ENCODE measurements at regions of chr7 and their contacts with region 1.

Region 1: DNA sequence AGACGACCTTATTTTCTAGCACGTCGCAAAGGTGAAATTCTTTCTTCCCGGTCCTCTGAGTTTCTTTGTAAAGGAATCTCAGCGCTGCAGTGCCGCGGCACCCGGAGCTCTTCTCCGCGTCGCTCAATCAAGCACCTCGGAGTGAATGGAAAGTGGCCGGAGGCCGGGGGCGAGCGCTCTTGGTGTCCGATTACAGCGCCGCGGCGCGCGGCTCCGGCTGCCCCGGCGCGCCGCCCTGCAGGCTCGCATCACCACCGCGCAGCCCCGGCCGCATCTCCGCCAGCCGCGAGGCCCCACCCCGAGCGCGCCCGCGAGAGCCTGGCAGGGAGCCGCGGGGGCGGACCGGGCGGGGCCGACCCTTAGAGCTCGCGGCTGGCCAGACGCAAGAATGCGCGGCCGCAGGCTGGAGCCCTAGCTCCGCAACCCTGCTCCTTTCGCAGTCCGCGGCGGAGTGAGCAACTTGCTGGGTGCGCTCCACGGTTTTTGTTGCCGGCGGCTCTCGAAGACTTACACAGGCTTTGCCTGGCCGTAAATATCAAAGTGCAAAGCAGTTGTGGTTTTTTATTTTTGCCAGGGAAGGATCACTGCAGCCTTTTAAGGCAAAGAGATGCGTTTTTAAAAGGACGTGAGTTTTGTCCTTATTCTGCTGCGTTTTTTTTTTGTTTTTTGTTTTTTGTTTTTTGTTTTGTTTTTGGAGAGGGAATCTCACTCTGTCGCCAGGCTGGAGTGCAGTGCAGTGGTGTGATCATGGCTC is at the start of gene SEMA3C:
- DNase-seq: peak; percentile 95
- H3K4me3 ChIP-seq: peak within 1 kb of the TSS; percentile 53 to 80 (median 78)
- H3K27ac ChIP-seq: peak within 1 kb of the TSS; percentile 76 to 91 (median 86)
- H3K4me1 ChIP-seq: peaks cover 4 to 43% (median 37%) of the 10 kb centered on the region in 4 donors
- H3K27me3 ChIP-seq: no peaks in the 10 kb centered on the region
- CTCF ChIP-seq: peak in 2 of 3 experiments; percentile 8 to 18
- EP300 ChIP-seq: no peak
- POLR2A ChIP-seq: peak; percentile 34
- total RNA-seq, gene SEMA3C: 117 to 181 (median 158) TPM

Region 2: DNA sequence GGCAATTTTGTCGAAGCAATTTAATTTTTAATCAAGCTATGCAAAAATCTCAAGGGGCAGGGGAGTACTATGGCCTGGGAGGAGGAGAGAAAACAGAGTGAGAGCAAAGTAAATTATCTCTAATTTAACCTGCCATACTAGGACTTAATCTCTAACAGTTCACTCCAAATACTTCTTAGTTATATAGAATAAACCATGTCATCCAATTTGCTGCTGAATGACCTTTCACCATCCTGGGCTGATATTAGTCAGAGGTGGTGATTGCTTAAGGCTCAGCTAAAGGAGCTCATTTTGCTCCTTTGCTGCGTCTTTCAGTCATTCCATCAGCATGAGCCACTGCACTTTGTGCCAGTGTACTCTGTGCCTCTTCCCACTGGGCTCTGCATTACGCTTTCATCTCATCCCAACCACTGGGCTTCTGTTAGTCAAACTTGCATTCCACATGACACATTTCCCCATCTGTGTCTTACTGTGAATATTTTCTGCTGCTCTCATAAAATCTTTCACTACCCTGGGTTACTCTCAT is 196.4 kb before region 1 on chr7:
- intact Hi-C with region 1: loop called (anchors 10 kb)
- DNase-seq: peak; percentile 92
- H3K4me3 ChIP-seq: no peak overlapping the region
- H3K27ac ChIP-seq: peak overlapping the region; percentile 69 to 85 (median 84)
- H3K4me1 ChIP-seq: peaks cover 7 to 44% (median 42%) of the 10 kb centered on the region in 4 donors
- H3K27me3 ChIP-seq: no peaks in the 10 kb centered on the region
- CTCF ChIP-seq: no peak
- EP300 ChIP-seq: no peak
- POLR2A ChIP-seq: no peak

Region 3: DNA sequence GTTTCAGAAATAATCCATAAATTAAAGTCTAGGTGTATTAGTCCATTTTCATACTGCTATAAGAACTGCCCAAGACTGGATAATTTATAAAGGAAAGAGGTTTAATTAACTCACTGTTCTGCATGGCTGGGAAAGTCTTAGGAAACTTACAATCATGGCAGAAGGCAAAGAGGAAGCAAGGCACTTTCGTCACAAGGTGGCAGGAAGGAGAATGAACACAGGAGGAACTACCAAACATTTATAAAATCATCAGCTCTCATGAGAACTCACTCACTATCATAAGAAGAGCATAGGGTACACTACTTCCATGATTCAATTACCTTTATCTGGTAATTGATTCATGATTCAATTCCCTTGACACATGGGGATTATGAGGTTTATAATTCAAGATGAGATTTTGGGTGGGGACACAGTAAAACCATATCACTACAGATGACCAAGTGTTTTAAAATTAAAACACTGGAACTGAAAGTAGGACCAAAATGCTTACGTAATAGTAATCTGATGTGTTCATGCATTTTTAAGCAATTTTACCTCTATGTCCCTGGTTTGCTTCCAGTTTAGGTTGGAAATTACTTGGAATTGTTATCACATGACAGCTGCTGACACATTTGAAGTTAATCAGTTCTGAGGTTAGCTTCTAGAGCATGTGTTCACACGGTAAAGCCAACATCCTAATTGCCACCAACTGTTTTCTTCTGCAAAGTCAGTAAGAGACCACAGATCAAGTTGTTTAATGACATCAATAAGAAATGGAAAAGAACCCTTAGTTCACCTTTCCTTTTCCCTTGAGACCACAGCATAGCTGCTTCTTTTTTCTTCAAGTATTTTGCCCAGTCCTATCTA is 48.2 kb after region 1 on chr7:
- intact Hi-C with region 1: no loop called
- DNase-seq: no peak
- H3K4me3 ChIP-seq: no peak overlapping the region
- H3K27ac ChIP-seq: no peak overlapping the region
- H3K4me1 ChIP-seq: no peaks in the 10 kb centered on the region
- H3K27me3 ChIP-seq: no peaks in the 10 kb centered on the region
- CTCF ChIP-seq: no peak
- EP300 ChIP-seq: no peak
- POLR2A ChIP-seq: no peak

Region 4: DNA sequence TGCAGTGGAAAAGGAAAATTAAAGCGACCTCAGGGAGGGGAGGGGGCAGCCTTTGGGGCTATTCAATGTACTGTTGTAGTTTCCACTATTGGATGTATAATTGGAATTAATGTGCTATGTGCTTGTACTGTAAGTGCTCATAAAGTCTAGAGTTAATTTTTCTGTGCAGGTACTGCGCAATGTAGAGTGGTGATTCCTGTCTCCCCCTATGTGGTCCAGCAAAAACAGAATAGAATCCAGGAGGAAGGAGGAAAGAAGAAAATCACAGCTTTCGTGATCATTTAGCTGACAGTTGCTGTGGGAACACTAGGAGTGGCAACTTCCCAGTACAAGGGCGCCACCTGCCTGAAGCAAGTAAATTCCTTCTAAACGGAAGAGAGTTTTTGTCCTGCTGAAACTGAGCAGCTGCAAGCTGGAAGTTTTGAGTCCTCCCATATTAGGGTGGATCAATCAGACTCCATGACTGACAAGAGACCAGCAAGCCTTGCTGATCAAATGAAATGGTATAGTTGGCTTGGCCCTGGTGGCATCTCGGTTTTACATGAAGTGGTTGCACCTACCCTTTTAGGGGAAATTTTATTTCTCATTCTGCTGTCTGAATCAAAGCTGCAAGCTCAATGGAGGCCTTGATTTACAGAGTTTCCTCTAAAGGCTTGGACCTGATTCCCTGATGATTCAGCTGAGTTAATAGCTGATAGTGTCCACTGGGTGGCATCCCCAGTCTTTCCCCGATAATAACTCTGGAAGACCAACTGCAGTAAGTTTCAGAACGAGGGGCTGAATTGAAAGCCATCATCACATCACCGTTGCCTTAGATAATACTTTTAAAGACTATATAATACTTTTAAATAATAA is 551.0 kb after region 1 on chr7:
- intact Hi-C with region 1: loop called (anchors 10 kb)
- DNase-seq: no peak
- H3K4me3 ChIP-seq: no peak overlapping the region
- H3K27ac ChIP-seq: no peak overlapping the region
- H3K4me1 ChIP-seq: peaks cover 0 to 9% (median 3%) of the 10 kb centered on the region in 4 donors
- H3K27me3 ChIP-seq: no peaks in the 10 kb centered on the region
- CTCF ChIP-seq: peak; percentile 61 to 69 (median 63)
- EP300 ChIP-seq: no peak
- POLR2A ChIP-seq: no peak

Measured in esophagus muscularis mucosa (tissue), 4 donors.